HepG2 (cell line): ENCODE measurements at regions of chr2 and their contacts with region 1.

Region 1: GRCh38 chr2:54330162-54330925 is 74.3 kb upstream of the TSPYL6 start:
- DNase-seq: peak; percentile 95
- ATAC-seq: peak; percentile 98
- H3K4me3 ChIP-seq: peak overlapping the region; percentile 49 to 73 (median 62)
- H3K27ac ChIP-seq: peak overlapping the region; percentile 23
- H3K4me1 ChIP-seq: peaks cover 28% of the 10 kb centered on the region
- H3K27me3 ChIP-seq: peaks cover 0 to 10% of the 10 kb centered on the region in 2 experiments; a peak in 1 of 5 replicates
- CTCF ChIP-seq: no peak; the same call in 1 of the 2 replicates
- EP300 ChIP-seq: no peak
- POLR2A ChIP-seq: peak; percentile 75 to 95
- RAD21 ChIP-seq: peak; percentile 52

Region 2: GRCh38 chr2:54106631-54107454 is 223.5 kb before region 1 on chr2:
- CTCF ChIA-PET with region 1: no interaction called
- POLR2A ChIA-PET with region 1: no interaction called
- in situ Hi-C with region 1: no loop called
- intact Hi-C with region 1: loop called (anchors 5 kb)
- DNase-seq: peak; percentile 73
- ATAC-seq: peak; percentile 85
- H3K4me3 ChIP-seq: peak overlapping the region in 1 of 3 experiments; percentile 32; a peak in 2 of 6 replicates
- H3K27ac ChIP-seq: no peak overlapping the region
- H3K4me1 ChIP-seq: peaks cover 32% of the 10 kb centered on the region
- H3K27me3 ChIP-seq: no peaks in the 10 kb centered on the region
- CTCF ChIP-seq: peak; percentile 85
- EP300 ChIP-seq: no peak
- POLR2A ChIP-seq: no peak
- RAD21 ChIP-seq: peak; percentile 78

Region 3: GRCh38 chr2:54176577-54176976 is 153.8 kb before region 1 on chr2:
- CTCF ChIA-PET with region 1: no interaction called
- POLR2A ChIA-PET with region 1: no interaction called
- in situ Hi-C with region 1: no loop called
- intact Hi-C with region 1: loop called (anchors 1 kb)
- DNase-seq: peak; percentile 85
- ATAC-seq: peak; percentile 99
- H3K4me3 ChIP-seq: no peak overlapping the region
- H3K27ac ChIP-seq: no peak overlapping the region
- H3K4me1 ChIP-seq: peaks cover 10% of the 10 kb centered on the region
- H3K27me3 ChIP-seq: no peaks in the 10 kb centered on the region
- CTCF ChIP-seq: peak; percentile 94
- EP300 ChIP-seq: no peak
- POLR2A ChIP-seq: no peak
- RAD21 ChIP-seq: peak; percentile 85

Region 4: GRCh38 chr2:54206596-54206995 is 123.7 kb before region 1 on chr2:
- CTCF ChIA-PET with region 1: no interaction called
- POLR2A ChIA-PET with region 1: no interaction called
- in situ Hi-C with region 1: no loop called
- intact Hi-C with region 1: loop called (anchors 10 kb)
- DNase-seq: peak; percentile 50
- ATAC-seq: no peak
- H3K4me3 ChIP-seq: no peak overlapping the region
- H3K27ac ChIP-seq: no peak overlapping the region
- H3K4me1 ChIP-seq: peaks cover 65% of the 10 kb centered on the region
- H3K27me3 ChIP-seq: no peaks in the 10 kb centered on the region
- CTCF ChIP-seq: peak; percentile 33; the same call in 1 of the 2 replicates
- EP300 ChIP-seq: no peak
- POLR2A ChIP-seq: no peak
- RAD21 ChIP-seq: peak; percentile 36; the same call in 1 of the 2 replicates

Region 5: GRCh38 chr2:54295911-54296310 is 34.4 kb before region 1 on chr2:
- CTCF ChIA-PET with region 1: no interaction called
- POLR2A ChIA-PET with region 1: no interaction called
- in situ Hi-C with region 1: no loop called
- intact Hi-C with region 1: no loop called
- DNase-seq: no peak
- ATAC-seq: no peak
- H3K4me3 ChIP-seq: no peak overlapping the region
- H3K27ac ChIP-seq: no peak overlapping the region
- H3K4me1 ChIP-seq: no peaks in the 10 kb centered on the region
- H3K27me3 ChIP-seq: no peaks in the 10 kb centered on the region
- CTCF ChIP-seq: no peak
- EP300 ChIP-seq: no peak
- POLR2A ChIP-seq: no peak
- RAD21 ChIP-seq: no peak

Region 6: DNA sequence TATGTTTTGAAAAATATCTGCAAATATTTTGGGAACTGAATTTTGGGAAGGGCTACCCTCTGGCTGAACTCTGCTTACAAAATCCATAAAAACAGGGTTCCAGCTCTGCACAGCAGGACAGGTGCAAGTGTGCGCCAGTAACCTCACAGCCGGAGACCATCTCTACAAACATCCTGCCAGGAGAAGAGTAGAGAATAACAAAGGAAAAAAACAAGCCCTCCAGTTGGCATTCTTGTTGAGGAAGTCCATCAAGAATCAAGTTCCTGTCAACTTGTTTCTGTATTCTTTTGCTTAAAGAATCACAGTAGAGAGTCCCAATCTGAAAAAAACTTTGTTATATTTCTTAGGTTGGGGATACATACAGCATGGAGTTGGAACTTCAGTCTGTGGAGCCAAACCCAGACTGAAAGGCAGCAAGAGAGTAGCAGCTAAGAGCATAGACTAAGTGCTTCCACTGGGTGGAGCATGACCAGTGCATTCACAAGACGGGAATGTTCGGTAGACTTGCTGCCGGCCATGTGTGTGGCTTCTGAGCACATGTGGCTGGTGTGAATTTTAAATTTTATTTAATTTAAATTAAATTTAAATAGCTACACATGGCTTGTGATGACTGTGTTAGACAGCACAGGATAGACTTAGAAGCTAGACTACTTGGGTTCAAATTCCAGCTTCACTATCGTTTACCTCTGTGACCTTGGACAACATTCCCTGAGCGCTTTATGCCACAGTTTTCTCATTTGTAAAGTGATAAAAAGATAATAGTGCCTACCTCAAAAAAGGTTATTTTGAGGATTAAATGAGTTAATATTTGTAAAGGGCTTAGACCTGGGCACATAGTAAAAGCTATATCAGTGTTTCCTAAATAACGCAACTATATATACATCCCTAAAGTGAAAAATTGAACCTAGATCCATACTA is 167.7 kb after region 1 on chr2:
- CTCF ChIA-PET with region 1: no interaction called
- POLR2A ChIA-PET with region 1: no interaction called
- in situ Hi-C with region 1: no loop called
- intact Hi-C with region 1: loop called (anchors 10 kb)
- DNase-seq: peak; percentile 70
- ATAC-seq: peak; percentile 97
- H3K4me3 ChIP-seq: no peak overlapping the region
- H3K27ac ChIP-seq: peak overlapping the region; percentile 54
- H3K4me1 ChIP-seq: peaks cover 53% of the 10 kb centered on the region
- H3K27me3 ChIP-seq: no peaks in the 10 kb centered on the region
- CTCF ChIP-seq: peak; percentile 68
- EP300 ChIP-seq: peak in 1 of 2 experiments; percentile 44; a peak in 1 of 4 replicates
- POLR2A ChIP-seq: no peak
- RAD21 ChIP-seq: peak; percentile 59; the same call in 1 of the 2 replicates